ENCODE measurements at regions of chr4 and their contacts with region 1.

Region 1: GRCh38 chr4:144174401-144175067 is 34.0 kb upstream of the GYPA start:
- DNase-seq: no peak
- ATAC-seq: peak; percentile 72
- H3K4me3 ChIP-seq: no peak overlapping the region
- H3K27ac ChIP-seq: no peak overlapping the region
- H3K4me1 ChIP-seq: no peaks in the 10 kb centered on the region
- H3K27me3 ChIP-seq: no peaks in the 10 kb centered on the region

Region 2: GRCh38 chr4:144634978-144635747 is 460.6 kb after region 1 on chr4:
- intact Hi-C with region 1: no loop called
- DNase-seq: no peak
- ATAC-seq: no peak
- H3K4me3 ChIP-seq: no peak overlapping the region
- H3K27ac ChIP-seq: no peak overlapping the region
- H3K4me1 ChIP-seq: no peaks in the 10 kb centered on the region
- H3K27me3 ChIP-seq: peaks cover 0 to under 1% of the 10 kb centered on the region in 2 donors

Region 3: DNA sequence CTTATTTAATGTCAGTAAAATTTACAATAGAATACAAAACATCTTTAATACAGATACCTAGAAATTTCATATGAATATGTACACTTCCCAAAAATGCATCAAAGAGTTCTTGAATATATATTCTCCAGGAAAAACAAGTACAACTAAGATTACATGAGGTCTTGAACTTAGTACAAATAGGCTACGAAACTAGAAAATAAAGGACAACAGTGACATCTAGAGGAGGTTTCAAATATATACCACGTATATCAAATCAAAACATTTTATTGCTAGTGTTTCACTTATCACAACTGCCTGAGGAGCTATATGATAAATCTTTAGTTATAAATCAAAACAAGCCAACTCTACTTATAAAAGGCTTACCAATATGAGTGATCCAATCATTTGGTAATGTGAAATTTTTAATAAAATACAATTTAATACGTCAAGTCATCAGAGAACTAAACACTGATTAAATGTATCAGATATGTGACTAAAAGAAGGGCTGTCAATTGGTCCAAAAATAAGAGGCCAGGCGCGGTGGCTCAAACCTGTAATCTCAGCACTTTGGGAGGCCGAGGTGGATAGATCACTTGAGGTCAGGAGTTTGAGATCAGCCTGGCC is 886.9 kb after region 1 on chr4:
- intact Hi-C with region 1: loop called (anchors 5 kb)
- DNase-seq: no peak
- ATAC-seq: peak; percentile 74
- H3K4me3 ChIP-seq: no peak overlapping the region
- H3K27ac ChIP-seq: no peak overlapping the region
- H3K4me1 ChIP-seq: no peaks in the 10 kb centered on the region
- H3K27me3 ChIP-seq: no peaks in the 10 kb centered on the region

Region 4: DNA sequence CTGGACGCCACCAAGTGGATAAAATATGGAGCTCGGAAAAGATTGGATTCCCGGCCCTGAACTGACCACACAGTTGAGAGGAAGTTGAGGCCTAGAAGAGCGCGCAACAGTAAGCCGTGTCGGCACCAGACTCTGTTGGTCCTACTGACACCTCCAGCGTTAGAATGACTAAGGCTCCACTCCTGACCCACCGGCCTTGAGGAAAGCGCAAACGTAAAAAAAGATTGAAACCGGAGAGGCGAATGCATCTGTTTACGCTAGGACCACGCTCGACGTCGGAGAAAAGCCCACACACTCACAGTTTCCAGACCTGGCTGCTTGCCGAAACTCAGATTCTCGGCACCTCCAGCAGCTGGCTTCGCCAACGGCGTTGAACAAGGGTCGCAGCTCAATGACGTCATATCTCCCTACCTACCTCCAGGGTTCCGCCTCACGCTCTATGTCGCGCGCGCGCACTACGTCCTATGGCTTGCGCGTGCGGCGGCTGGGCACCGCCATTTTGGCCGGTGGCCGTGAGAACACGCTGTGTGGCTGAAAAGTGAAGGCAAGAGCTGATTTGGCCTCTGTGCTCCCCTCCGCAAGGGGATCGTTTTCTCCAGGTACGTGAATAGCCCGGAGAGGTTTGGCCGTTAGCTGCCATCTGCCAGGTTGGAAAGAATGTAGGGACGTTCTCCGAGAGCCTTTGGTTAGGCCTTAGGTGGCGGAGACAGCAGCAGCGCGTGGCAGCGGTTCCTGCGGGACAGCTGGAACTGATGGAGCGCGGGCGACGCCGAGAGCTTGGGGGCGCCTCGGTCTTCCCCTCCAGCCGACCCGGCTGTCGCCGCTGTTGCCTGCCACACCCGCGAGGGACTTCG is 923.5 kb after region 1 on chr4 and contains the starts of genes ABCE1 and ANAPC10:
- intact Hi-C with region 1: loop called in 1 of 2 experiments (anchors 10 kb)
- DNase-seq: peak; percentile 97 to 98
- ATAC-seq: peak; percentile 99
- H3K4me3 ChIP-seq: peak within 1 kb of the TSS; percentile 64 to 79
- H3K27ac ChIP-seq: peak within 1 kb of the TSS; percentile 73 to 76
- H3K4me1 ChIP-seq: peaks cover 2% of the 10 kb centered on the region in 2 donors
- H3K27me3 ChIP-seq: no peaks in the 10 kb centered on the region
- total RNA-seq, gene ABCE1: 39.2 to 43.9 TPM
- total RNA-seq, gene ANAPC10: 20.2 to 22.8 TPM

Measured in aorta (tissue), 5 donors.